ENCODE measurements at regions of chr1 and their contacts with region 1.

Region 1: GRCh38 chr1:152189657-152190442 is 30.8 kb upstream of the RPTN start:
- DNase-seq: peak in 9 of 10 donors; percentile 8 to 68 (median 51)
- H3K4me3 ChIP-seq: peak overlapping the region in 51 of 59 donors; percentile 34 to 72 (median 59)
- H3K27ac ChIP-seq: no peak overlapping the region
- H3K27me3 ChIP-seq: peaks cover 0 to 16% (median 0%) of the 10 kb centered on the region in 45 donors
- CTCF ChIP-seq: peak; percentile 55 to 82 (median 73)

Region 2: GRCh38 chr1:152052606-152053005 is 137.2 kb before region 1 on chr1:
- intact Hi-C with region 1: loop called (anchors 2 kb)
- DNase-seq: peak; percentile 65 to 89 (median 83)
- H3K4me3 ChIP-seq: no peak overlapping the region
- H3K27ac ChIP-seq: no peak overlapping the region
- H3K27me3 ChIP-seq: peaks cover 0 to 34% (median 0%) of the 10 kb centered on the region in 45 donors
- CTCF ChIP-seq: peak; percentile 83 to 97 (median 92)

Region 3: GRCh38 chr1:152459596-152460528 is 270.0 kb after region 1 on chr1:
- intact Hi-C with region 1: loop called (anchors 2 to 5 kb)
- DNase-seq: peak in 8 of 10 donors; percentile 10 to 70 (median 62)
- H3K4me3 ChIP-seq: peak overlapping the region in 36 of 59 donors; percentile 3 to 56 (median 30)
- H3K27ac ChIP-seq: peak overlapping the region in 13 of 59 donors; percentile 2 to 71 (median 31)
- H3K27me3 ChIP-seq: peaks cover 0 to 3% (median 0%) of the 10 kb centered on the region in 45 donors
- CTCF ChIP-seq: peak; percentile 41 to 89 (median 76)

Measured in dorsolateral prefrontal cortex (tissue), 120 donors.